Naive thymus-derived CD4-positive, alpha-beta T cell (primary cell): ENCODE measurements at regions of chr6 and their contacts with region 1.

Region 1: GRCh38 chr6:26065952-26066380 is 21.3 kb upstream of the HFE start:
- DNase-seq: peak in 7 of 9 donors; percentile 51 to 74 (median 61)
- ATAC-seq: peak; percentile 97
- H3K4me3 ChIP-seq: no peak overlapping the region
- H3K4me3 Mint-ChIP-seq: no peak overlapping the region
- H3K27ac ChIP-seq: no peak overlapping the region
- H3K27ac Mint-ChIP-seq: no peak overlapping the region
- H3K4me1 ChIP-seq: no peaks in the 10 kb centered on the region
- H3K4me1 Mint-ChIP-seq: peaks cover 1 to 22% (median 11%) of the 10 kb centered on the region in 7 donors
- H3K27me3 ChIP-seq: no peaks in the 10 kb centered on the region
- H3K27me3 Mint-ChIP-seq: peaks cover 0 to 39% (median 0%) of the 10 kb centered on the region in 5 donors

Region 2: DNA sequence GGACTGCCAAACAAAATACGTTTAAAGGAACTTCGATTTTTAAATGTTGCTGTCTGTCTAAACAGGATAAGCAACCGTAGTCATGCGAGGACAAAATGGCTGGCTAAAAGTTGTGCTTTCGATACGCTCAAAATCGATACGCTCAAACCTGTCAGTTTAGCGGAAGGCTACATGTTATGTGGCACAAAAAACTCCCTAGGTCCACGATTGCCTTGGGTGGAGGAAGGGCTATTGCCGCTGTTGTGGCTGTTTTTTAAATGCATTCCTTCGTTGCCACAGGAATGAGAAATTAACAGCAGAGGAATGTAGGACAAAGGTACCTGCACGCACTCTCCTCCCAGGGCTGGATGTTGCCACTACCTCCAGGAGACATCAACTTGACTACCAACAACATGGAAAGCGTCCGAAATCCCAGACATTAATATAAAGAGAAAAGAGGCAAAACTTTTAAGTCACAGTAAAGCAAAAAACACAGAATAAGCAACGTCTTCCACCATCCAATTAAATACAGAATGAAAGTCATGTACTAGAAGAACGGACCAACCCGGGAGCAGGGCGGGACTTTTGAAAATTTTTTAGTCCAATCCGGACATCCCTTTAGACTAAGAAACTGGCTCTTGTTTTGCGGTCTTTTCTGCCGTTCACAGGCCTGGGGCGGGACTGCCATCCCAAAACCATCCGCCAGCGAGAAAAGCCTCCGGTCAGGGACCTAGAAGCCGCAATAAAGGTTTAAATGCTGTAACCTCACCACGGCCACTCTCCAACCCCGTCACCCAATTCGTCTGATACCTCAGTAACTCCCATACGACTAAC is 10.9 kb before region 1 on chr6:
- CTCF ChIA-PET with region 1: interaction called, 8 read pairs
- POLR2A ChIA-PET with region 1: interaction called, 390 read pairs
- intact Hi-C with region 1: no loop called
- DNase-seq: peak; percentile 54 to 94 (median 90)
- ATAC-seq: peak; percentile 81
- H3K4me3 ChIP-seq: peak overlapping the region; percentile 93
- H3K4me3 Mint-ChIP-seq: peak overlapping the region; percentile 88 to 99 (median 95)
- H3K27ac ChIP-seq: peak overlapping the region; percentile 83
- H3K27ac Mint-ChIP-seq: peak overlapping the region; percentile 95 to 99 (median 98)
- H3K4me1 ChIP-seq: peaks cover 0 to 14% of the 10 kb centered on the region in 2 donors
- H3K4me1 Mint-ChIP-seq: peaks cover 9 to 52% (median 10%) of the 10 kb centered on the region in 7 donors
- H3K27me3 ChIP-seq: no peaks in the 10 kb centered on the region
- H3K27me3 Mint-ChIP-seq: peaks cover 0 to 10% (median 0%) of the 10 kb centered on the region in 5 donors

Region 3: GRCh38 chr6:26087284-26088115 is 21.5 kb after region 1 on chr6 and contains the start of gene HFE:
- CTCF ChIA-PET with region 1: interaction called, 232 read pairs
- POLR2A ChIA-PET with region 1: interaction called, 254 read pairs
- intact Hi-C with region 1: loop called in 1 of 2 experiments (anchors 1 kb)
- DNase-seq: peak in 8 of 9 donors; percentile 32 to 46 (median 38)
- ATAC-seq: peak; percentile 41
- H3K4me3 ChIP-seq: peak within 1 kb of the TSS; percentile 88
- H3K4me3 Mint-ChIP-seq: peak within 1 kb of the TSS; percentile 84 to 91 (median 88)
- H3K27ac ChIP-seq: peak within 1 kb of the TSS; percentile 72
- H3K27ac Mint-ChIP-seq: peak within 1 kb of the TSS; percentile 73 to 91 (median 84)
- H3K4me1 ChIP-seq: peaks cover 18 to 23% of the 10 kb centered on the region in 2 donors
- H3K4me1 Mint-ChIP-seq: peaks cover 31 to 51% (median 39%) of the 10 kb centered on the region in 7 donors
- H3K27me3 ChIP-seq: no peaks in the 10 kb centered on the region
- H3K27me3 Mint-ChIP-seq: peaks cover 0 to 5% (median 5%) of the 10 kb centered on the region in 5 donors
- total RNA-seq, gene HFE: 1.5 to 4.6 (median 2.5) TPM

Region 4: DNA sequence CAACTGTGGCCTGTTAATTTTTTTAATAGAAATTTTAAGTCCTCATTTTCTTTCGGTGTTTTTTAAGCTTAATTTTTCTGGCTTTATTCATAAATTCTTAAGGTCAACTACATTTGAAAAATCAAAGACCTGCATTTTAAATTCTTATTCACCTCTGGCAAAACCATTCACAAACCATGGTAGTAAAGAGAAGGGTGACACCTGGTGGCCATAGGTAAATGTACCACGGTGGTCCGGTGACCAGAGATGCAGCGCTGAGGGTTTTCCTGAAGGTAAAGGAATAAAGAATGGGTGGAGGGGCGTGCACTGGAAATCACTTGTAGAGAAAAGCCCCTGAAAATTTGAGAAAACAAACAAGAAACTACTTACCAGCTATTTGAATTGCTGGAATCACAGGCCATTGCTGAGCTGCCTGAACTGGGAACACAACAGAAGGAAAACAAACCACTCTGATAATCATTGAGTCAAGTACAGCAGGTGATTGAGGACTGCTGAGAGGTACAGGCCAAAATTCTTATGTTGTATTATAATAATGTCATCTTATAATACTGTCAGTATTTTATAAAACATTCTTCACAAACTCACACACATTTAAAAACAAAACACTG is 31.4 kb after region 1 on chr6:
- CTCF ChIA-PET with region 1: interaction called, 232 read pairs
- POLR2A ChIA-PET with region 1: interaction called, 298 read pairs
- intact Hi-C with region 1: loop called (anchors 1 kb)
- DNase-seq: peak; percentile 23 to 75 (median 61)
- ATAC-seq: peak; percentile 92
- H3K4me3 ChIP-seq: no peak overlapping the region
- H3K4me3 Mint-ChIP-seq: no peak overlapping the region
- H3K27ac ChIP-seq: no peak overlapping the region
- H3K27ac Mint-ChIP-seq: no peak overlapping the region
- H3K4me1 ChIP-seq: no peaks in the 10 kb centered on the region
- H3K4me1 Mint-ChIP-seq: peaks cover 4 to 13% (median 8%) of the 10 kb centered on the region in 7 donors
- H3K27me3 ChIP-seq: no peaks in the 10 kb centered on the region
- H3K27me3 Mint-ChIP-seq: peaks cover 0 to 9% (median 0%) of the 10 kb centered on the region in 5 donors